G401 (cell line): ENCODE measurements at regions of chr21 and their contacts with region 1.

Region 1: DNA sequence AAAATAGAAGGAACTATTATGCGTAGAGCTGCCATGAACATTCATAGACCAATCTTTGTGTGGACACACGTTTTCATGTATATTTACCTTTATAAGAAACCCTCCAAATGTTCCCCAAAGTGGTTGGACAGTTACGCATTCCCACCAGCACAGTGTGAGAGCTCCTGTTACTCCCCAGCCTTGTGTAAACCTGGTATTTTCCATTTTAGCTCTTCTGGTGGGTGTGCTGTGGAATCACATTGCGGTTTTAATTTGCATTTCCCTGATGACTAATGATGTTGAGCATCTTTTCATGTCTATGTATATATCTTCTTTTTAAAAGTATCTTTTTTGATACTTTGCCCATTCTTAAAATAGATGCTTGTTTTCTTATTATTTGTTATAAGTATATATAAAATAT is 3.2 kb upstream of the UBASH3A start:
- DNase-seq: no peak

Region 2: DNA sequence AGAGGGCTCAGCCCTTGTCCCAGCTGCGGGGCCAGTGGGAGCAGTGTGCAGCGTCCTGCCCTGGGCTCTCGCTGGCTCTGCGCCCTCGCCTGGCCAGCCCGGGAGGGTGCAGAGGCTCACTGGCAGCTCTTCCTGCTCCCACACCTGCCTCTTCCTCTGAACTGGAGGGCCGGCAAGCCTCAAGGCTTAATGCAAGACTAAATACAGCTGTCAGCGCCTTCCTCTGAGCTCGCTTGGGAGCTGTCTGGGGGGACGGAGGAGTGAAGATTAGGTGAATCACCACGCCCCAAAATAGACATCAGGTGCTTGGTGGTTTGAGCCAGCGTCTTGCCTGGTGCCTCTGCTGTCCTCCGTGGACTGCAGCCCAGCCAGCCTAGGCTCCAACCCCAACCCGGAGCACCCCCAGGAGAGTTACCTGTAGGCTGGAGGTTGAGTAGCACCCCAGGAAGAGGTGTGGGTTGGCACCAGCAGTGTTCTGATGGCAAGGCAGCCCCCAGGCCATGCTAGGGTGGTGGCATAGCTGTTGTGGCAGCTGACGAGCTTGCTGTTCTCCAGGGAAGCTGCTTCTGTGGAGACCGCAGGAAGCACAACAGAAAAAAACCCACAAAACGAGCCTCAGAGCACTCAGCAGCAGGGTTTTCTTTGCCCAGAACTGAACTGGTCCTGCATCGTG is 292.5 kb before region 1 on chr21:
- in situ Hi-C with region 1: no loop called
- DNase-seq: peak; percentile 70

Region 3: DNA sequence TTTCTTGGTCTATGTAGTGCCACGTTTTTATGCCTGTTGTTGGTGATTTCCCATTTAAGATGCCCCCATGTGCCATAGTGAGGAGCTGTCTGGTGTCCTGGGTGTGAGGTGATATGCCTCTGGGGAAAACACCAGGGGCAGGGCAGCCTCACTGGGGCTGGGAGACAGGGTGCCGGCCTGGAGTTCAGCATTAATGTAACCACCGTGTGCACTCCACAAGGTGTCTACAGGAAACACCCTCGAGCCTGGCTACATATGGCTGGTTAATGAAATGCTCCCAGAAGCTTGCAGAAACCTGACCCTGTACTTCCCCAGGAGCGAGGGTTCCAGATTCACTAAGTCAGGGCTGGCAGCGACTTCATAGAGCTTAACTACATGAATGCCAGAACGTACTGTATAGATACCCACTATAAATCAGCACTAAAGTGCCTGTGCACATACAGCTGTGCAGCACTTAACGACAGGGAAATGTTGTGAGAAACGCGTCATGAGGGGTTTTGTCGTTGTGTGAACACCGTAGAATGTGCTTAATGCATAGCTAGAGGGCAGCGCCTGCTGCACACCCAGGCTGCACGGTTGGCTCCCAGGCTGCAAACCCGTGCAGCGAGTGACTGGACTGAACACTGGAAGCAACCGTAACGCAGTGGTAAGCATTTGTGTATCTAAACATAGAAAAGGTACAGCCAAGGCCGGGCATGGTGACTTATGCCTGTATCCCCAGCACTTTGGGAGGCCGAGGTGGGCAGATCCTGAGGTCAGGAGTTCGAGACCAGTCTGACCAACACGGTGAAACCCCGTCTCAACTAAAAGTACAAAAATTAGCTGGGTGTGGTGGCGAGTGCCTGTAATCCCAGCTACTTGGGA is 60.1 kb before region 1 on chr21:
- in situ Hi-C with region 1: loop called (anchors 10 kb)
- DNase-seq: no peak

Region 4: GRCh38 chr21:42449296-42449927 is 48.9 kb after region 1 on chr21:
- in situ Hi-C with region 1: no loop called
- DNase-seq: no peak